A673 (cell line): ENCODE measurements at regions of chr9 and their contacts with region 1.

Region 1: GRCh38 chr9:74496819-74497747 is at the start of gene RORB:
- DNase-seq: peak; percentile 60
- H3K4me3 ChIP-seq: peak within 1 kb of the TSS; percentile 40
- H3K27ac ChIP-seq: no peak within 1 kb of the TSS
- H3K4me1 ChIP-seq: peaks cover 10% of the 10 kb centered on the region
- H3K27me3 ChIP-seq: peaks cover 76% of the 10 kb centered on the region
- CTCF ChIP-seq: no peak
- total RNA-seq, gene RORB: 0.02 TPM in 1 of 2 replicates, not detected in the other

Region 2: DNA sequence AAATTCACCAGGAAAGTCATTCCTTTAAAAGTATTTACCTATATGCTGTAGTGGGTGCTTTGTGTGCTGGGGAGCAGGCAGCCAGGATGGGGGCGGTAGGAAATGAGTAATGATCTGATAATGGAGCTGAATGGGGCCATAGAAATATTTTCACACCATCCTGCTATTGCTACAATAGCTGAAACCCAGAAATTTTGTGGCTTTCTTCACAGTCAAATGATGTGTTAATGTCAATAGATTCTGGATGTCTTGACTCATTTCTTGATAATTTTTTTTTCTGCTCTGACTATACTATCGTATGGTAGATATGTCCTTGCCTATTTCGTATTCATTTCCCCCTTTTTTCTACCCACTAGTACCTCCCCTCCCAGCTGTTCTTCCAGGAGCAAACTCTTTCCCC is 59.6 kb after region 1 on chr9:
- CTCF ChIA-PET with region 1: no interaction called
- POLR2A ChIA-PET with region 1: no interaction called
- intact Hi-C with region 1: loop called (anchors 10 kb)
- DNase-seq: no peak
- H3K4me3 ChIP-seq: no peak overlapping the region
- H3K27ac ChIP-seq: no peak overlapping the region
- H3K4me1 ChIP-seq: no peaks in the 10 kb centered on the region
- H3K27me3 ChIP-seq: no peaks in the 10 kb centered on the region
- CTCF ChIP-seq: no peak